ENCODE measurements at regions of chr1 and their contacts with region 1.

Region 1: DNA sequence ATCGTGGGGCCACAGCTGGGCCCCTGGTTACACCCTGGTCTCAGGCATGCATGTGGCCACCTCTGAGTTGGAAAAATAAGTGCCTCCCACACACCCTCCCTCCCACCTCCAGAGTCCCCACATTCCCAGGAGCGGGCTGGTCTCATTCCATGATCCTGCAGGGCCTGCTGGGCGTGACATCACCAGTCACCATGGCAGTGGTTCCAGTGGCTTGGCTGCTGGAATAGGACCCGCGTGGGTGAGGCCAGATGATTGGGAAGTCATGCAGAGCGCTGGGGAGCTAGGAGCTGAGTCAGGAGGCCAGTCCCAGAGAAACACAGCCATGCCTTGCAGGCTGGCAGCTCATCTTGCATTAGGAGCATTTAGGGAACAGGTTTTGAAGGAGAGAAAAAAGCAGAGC is 125.4 kb upstream of the TMEM51 start:
- DNase-seq: peak in 4 of 5 donors; percentile 27 to 70 (median 57)
- ATAC-seq: peak; percentile 48 to 83 (median 71)
- H3K4me3 ChIP-seq: no peak overlapping the region
- H3K27ac ChIP-seq: no peak overlapping the region
- H3K4me1 ChIP-seq: peaks cover 0 to 4% (median 0%) of the 10 kb centered on the region in 12 donors
- H3K27me3 ChIP-seq: peaks cover 0 to 3% (median 0%) of the 10 kb centered on the region in 9 donors
- CTCF ChIP-seq: no peak
- POLR2A ChIP-seq: no peak

Region 2: GRCh38 chr1:14094611-14095400 is 933.3 kb before region 1 on chr1:
- intact Hi-C with region 1: loop called in 1 of 10 experiments (anchors 10 kb)
- DNase-seq: no peak
- ATAC-seq: no peak
- H3K4me3 ChIP-seq: no peak overlapping the region
- H3K27ac ChIP-seq: no peak overlapping the region
- H3K4me1 ChIP-seq: no peaks in the 10 kb centered on the region
- H3K27me3 ChIP-seq: peaks cover 0 to 37% (median 0%) of the 10 kb centered on the region in 9 donors
- CTCF ChIP-seq: peak in 8 of 12 donors; percentile 9 to 44 (median 32)
- POLR2A ChIP-seq: no peak

Region 3: GRCh38 chr1:14113841-14114567 is 914.1 kb before region 1 on chr1:
- intact Hi-C with region 1: loop called in 4 of 10 experiments (anchors 5 kb)
- DNase-seq: peak in 4 of 5 donors; percentile 23 to 53 (median 32)
- ATAC-seq: peak; percentile 61 to 85 (median 78)
- H3K4me3 ChIP-seq: no peak overlapping the region
- H3K27ac ChIP-seq: no peak overlapping the region
- H3K4me1 ChIP-seq: no peaks in the 10 kb centered on the region
- H3K27me3 ChIP-seq: no peaks in the 10 kb centered on the region
- CTCF ChIP-seq: peak in 11 of 12 donors; percentile 32 to 62 (median 49)
- POLR2A ChIP-seq: no peak

Region 4: DNA sequence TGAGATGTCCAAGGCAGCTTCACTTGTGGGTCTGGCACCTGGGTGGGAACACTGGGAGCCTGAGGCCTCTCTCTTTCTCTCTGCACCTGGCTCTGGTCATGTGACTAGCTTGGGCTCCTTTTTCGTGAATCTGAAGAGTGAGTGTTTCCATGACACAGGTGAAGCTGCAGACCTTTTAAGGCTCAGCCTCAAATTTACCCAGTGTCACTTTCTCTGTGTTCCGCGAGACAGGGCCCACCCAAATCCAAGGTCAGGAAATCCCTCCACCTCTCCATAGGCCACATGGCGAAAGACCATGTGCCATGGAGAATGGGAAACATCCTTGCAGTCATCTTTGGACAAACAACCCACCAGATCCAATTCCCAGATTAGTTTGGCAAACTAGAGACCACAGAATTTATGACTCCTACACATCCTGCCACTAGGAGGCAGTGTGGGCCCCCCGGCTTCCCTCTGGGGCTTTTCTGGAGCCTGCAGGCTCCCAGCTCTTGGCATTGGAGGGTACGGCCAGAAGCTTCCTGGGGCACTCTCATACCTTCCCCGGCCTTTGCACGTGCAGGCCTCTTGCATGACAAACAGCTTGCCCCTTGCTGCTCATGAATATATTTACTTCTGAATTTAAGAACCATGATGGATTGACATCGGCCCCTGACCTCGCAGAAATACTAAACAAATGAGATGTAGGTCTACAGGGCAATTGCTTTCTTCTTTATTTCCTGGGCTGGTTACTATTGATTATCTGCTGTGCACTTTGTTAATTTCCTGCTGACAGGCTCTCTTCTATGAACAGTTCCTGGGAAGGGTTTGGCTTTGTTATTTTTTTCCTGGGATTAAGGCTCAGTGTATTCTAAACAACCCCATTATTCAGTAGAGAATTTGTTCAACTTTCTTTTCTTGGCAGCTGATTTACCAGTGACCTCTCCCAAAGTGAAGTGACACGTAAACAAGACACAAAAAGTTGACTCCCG is 248.9 kb before region 1 on chr1:
- intact Hi-C with region 1: loop called in 5 of 10 experiments (anchors 5 kb)
- DNase-seq: peak in 1 of 5 donors; percentile 22
- ATAC-seq: no peak
- H3K4me3 ChIP-seq: no peak overlapping the region
- H3K27ac ChIP-seq: no peak overlapping the region
- H3K4me1 ChIP-seq: no peaks in the 10 kb centered on the region
- H3K27me3 ChIP-seq: peaks cover 0 to 2% (median 0%) of the 10 kb centered on the region in 9 donors
- CTCF ChIP-seq: peak; percentile 48 to 73 (median 64)
- POLR2A ChIP-seq: no peak

Region 5: GRCh38 chr1:14915356-14916054 is 112.6 kb before region 1 on chr1:
- intact Hi-C with region 1: loop called in 5 of 10 experiments (anchors 1 to 5 kb)
- DNase-seq: peak in 4 of 5 donors; percentile 27 to 53 (median 43)
- ATAC-seq: peak in 3 of 4 donors; percentile 48 to 62 (median 59)
- H3K4me3 ChIP-seq: no peak overlapping the region
- H3K27ac ChIP-seq: no peak overlapping the region
- H3K4me1 ChIP-seq: peaks cover 0 to 2% (median 0%) of the 10 kb centered on the region in 12 donors
- H3K27me3 ChIP-seq: no peaks in the 10 kb centered on the region
- CTCF ChIP-seq: peak; percentile 80 to 93 (median 90)
- POLR2A ChIP-seq: no peak

Region 6: GRCh38 chr1:14923727-14924452 is 104.2 kb before region 1 on chr1:
- intact Hi-C with region 1: loop called in 8 of 10 experiments (anchors 1 to 5 kb)
- DNase-seq: peak; percentile 75 to 85 (median 79)
- ATAC-seq: peak in 3 of 4 donors; percentile 73 to 84 (median 77)
- H3K4me3 ChIP-seq: peak overlapping the region in 9 of 12 donors; percentile 15 to 91 (median 70)
- H3K27ac ChIP-seq: peak overlapping the region in 4 of 12 donors; percentile 23 to 66 (median 43)
- H3K4me1 ChIP-seq: peaks cover 0 to 23% (median 13%) of the 10 kb centered on the region in 12 donors
- H3K27me3 ChIP-seq: peaks cover 0 to 32% (median 4%) of the 10 kb centered on the region in 9 donors
- CTCF ChIP-seq: no peak
- POLR2A ChIP-seq: no peak

Region 7: GRCh38 chr1:14970115-14970798 is 57.8 kb before region 1 on chr1:
- intact Hi-C with region 1: loop called in 1 of 10 experiments (anchors 5 kb)
- DNase-seq: peak in 2 of 5 donors; percentile 57 to 67
- ATAC-seq: peak in 3 of 4 donors; percentile 21 to 58 (median 29)
- H3K4me3 ChIP-seq: no peak overlapping the region
- H3K27ac ChIP-seq: no peak overlapping the region
- H3K4me1 ChIP-seq: peaks cover 0 to 28% (median 14%) of the 10 kb centered on the region in 12 donors
- H3K27me3 ChIP-seq: no peaks in the 10 kb centered on the region
- CTCF ChIP-seq: no peak
- POLR2A ChIP-seq: no peak

Region 8: GRCh38 chr1:14987829-14988603 is 40.1 kb before region 1 on chr1:
- intact Hi-C with region 1: no loop called
- DNase-seq: peak in 2 of 5 donors; percentile 32 to 72
- ATAC-seq: peak; percentile 45 to 79 (median 61)
- H3K4me3 ChIP-seq: no peak overlapping the region
- H3K27ac ChIP-seq: peak overlapping the region in 1 of 12 donors; percentile 11
- H3K4me1 ChIP-seq: peaks cover 0 to 9% (median 0%) of the 10 kb centered on the region in 12 donors
- H3K27me3 ChIP-seq: no peaks in the 10 kb centered on the region
- CTCF ChIP-seq: no peak
- POLR2A ChIP-seq: no peak

Region 9: DNA sequence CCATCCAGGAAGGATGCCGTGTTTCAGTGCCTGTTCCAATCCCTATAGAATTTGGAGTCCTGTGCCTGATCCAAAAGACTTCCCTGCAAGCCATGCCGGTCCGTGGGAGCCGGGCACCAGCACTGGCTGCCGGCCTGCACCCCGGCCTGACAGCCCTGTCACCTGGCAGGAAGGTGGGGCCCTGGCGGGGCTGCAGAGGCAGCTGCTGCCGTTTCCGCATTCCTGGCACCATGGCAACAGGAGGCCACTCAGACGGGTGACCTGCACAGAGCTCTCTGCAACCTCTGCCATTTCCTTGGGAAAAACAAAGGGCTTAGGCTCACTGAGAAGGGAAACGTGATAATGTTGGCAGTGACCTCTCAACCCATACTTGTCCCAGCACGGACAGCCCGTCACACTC is 62.3 kb after region 1 on chr1:
- intact Hi-C with region 1: no loop called
- DNase-seq: peak in 4 of 5 donors; percentile 20 to 56 (median 38)
- ATAC-seq: peak in 3 of 4 donors; percentile 51 to 62 (median 61)
- H3K4me3 ChIP-seq: no peak overlapping the region
- H3K27ac ChIP-seq: no peak overlapping the region
- H3K4me1 ChIP-seq: peaks cover 0 to 13% (median 0%) of the 10 kb centered on the region in 12 donors
- H3K27me3 ChIP-seq: no peaks in the 10 kb centered on the region
- CTCF ChIP-seq: no peak
- POLR2A ChIP-seq: no peak

Measured in heart left ventricle (tissue), 16 donors.